ENCODE measurements at regions of chr10 and their contacts with region 1.

Region 1: DNA sequence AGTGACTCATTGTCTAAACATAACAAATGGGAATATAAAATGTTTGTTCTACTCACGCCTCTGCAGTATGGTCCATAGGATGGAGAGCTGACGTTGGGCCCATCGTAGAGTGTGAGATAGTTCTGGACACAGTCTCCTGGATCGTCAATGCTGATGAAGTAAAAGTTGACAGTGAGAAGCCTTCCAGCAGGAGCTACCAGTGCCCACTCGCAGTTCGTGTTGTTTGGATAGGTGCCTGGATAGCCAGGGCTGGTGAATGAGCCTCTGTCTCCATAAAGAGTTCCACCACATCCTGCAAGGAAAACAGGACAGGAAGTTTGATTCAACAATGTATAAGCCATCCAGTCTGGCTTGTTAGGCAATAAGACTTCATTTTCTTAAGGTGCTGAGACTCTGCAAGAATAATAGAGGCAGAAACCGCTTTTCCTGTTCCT is 79.6 kb downstream of the OR13A1 start:
- DNase-seq: peak; percentile 2
- ATAC-seq: no peak
- H3K4me3 ChIP-seq: no peak overlapping the region
- H3K4me3 Mint-ChIP-seq: no peak overlapping the region
- H3K27ac ChIP-seq: no peak overlapping the region
- H3K27ac Mint-ChIP-seq: no peak overlapping the region
- H3K4me1 ChIP-seq: no peaks in the 10 kb centered on the region
- H3K4me1 Mint-ChIP-seq: no peaks in the 10 kb centered on the region
- H3K27me3 ChIP-seq: no peaks in the 10 kb centered on the region
- H3K27me3 Mint-ChIP-seq: peaks cover 8% of the 10 kb centered on the region
- CTCF ChIP-seq: no peak

Region 2: DNA sequence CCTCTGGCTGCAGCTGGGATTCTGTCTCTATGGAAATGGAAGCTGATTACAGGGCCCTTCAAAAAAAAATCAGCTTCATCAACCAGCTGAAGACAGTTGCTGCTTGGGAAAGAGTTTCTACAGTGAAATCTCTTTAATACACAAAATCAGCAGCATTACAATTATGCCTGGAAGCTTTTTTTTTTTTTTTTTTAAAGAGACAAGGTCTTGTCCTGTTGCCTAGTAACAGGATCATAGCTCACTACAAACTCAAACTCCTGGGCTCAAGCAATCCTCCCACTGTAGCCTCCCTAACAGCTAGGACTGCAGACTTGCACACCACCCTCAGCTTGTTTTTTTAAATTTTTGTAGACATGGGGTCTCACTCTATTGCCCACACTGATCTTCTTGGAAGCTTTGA is 14.9 kb before region 1 on chr10:
- CTCF ChIA-PET with region 1: interaction called, 16 read pairs
- POLR2A ChIA-PET with region 1: no interaction called
- intact Hi-C with region 1: no loop called
- DNase-seq: no peak
- ATAC-seq: no peak
- H3K4me3 ChIP-seq: no peak overlapping the region
- H3K4me3 Mint-ChIP-seq: no peak overlapping the region
- H3K27ac ChIP-seq: no peak overlapping the region
- H3K27ac Mint-ChIP-seq: no peak overlapping the region
- H3K4me1 ChIP-seq: no peaks in the 10 kb centered on the region
- H3K4me1 Mint-ChIP-seq: no peaks in the 10 kb centered on the region
- H3K27me3 ChIP-seq: no peaks in the 10 kb centered on the region
- H3K27me3 Mint-ChIP-seq: peaks cover 3% of the 10 kb centered on the region
- CTCF ChIP-seq: no peak

Region 3: DNA sequence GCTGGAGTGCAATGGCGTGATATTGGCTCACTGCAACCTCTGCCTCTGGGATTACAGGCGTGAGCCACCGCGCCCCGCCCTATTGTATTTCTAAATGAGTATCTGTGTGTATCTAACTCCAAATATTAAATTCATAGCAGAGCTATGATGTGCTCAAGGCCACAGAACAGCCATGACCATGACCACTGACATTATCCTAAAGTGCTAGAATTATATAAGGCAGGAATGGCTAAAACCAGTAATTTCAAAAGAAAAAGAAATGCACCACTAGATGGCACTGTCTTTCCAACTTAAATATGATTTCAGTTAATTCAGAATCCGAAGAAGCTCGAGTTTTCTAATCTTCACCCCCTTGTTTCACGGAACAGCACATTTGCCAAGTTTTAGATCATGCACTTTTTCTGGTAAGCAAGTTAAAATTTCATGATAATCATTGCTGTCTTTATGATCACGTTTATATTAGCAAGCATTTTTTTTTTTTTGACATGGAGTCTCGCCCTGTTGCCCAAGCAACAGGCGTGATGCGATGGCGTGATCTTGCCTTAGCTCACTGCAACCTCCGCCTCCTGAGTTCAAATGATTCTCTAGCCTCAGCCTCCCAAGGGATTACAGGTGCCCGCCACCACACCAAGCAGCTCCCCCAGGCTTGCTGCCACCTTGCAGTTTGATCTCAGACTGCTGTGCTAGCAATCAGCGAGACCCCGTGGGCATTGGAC is 14.3 kb after region 1 on chr10:
- CTCF ChIA-PET with region 1: interaction called, 13 read pairs
- POLR2A ChIA-PET with region 1: no interaction called
- intact Hi-C with region 1: no loop called
- DNase-seq: peak; percentile 82
- ATAC-seq: peak; percentile 90
- H3K4me3 ChIP-seq: peak overlapping the region in 4 of 5 experiments; percentile 1 to 56 (median 44)
- H3K4me3 Mint-ChIP-seq: peak overlapping the region; percentile 86
- H3K27ac ChIP-seq: peak overlapping the region; percentile 0 to 60
- H3K27ac Mint-ChIP-seq: peak overlapping the region; percentile 82
- H3K4me1 ChIP-seq: peaks cover 15 to 18% of the 10 kb centered on the region in 2 donors
- H3K4me1 Mint-ChIP-seq: peaks cover 26% of the 10 kb centered on the region
- H3K27me3 ChIP-seq: no peaks in the 10 kb centered on the region
- H3K27me3 Mint-ChIP-seq: peaks cover 7% of the 10 kb centered on the region
- CTCF ChIP-seq: peak; percentile 83